PC-9 (cell line): ENCODE measurements at regions of chr6 and their contacts with region 1.

Region 1: DNA sequence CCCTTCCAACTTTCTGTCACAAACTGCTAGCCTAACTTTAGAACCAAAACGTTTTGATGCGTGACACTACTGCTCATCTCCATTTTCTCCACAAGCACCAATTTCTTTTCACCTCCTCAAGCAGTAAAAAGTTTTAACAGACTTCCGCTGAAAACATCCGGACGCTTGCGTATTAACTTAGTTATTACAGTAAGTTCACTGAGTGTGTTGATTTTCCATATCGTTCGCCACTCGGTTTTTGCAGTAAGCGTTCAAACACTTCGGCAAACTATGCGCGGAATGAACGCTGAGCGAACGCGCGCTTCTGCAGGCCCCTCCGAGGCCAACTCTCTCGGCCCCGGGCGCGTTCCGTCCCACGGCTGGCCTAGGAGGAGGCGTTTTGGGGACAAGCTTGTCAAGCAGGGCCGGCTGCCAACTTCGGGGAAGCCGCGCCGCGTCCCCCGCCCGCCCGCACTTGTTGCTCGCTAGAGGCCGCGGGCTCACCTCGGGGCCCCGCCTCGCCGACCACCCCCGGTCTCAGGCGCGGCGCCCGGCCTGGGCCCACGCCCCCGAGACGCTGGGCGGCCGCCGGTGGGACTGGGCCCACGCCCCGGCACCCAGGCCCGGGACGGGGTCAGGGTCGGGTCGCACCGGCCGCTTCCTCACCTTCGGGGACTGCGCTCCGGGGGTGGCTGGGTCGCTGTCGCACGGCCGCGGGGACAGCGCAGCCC is 945 bp downstream of the PHF10 start:
- DNase-seq: peak; percentile 36 to 39
- H3K4me3 ChIP-seq: peak overlapping the region; percentile 74
- H3K27ac ChIP-seq: peak overlapping the region; percentile 34
- H3K4me1 ChIP-seq: peaks cover 34% of the 10 kb centered on the region
- H3K27me3 ChIP-seq: no peaks in the 10 kb centered on the region
- CTCF ChIP-seq: no peak

Region 2: GRCh38 chr6:169751242-169752073 is 28.1 kb after region 1 on chr6 and contains the starts of genes DYNLT2 and ERMARD:
- CTCF ChIA-PET with region 1: no interaction called
- POLR2A ChIA-PET with region 1: no interaction called
- intact Hi-C with region 1: loop called (anchors 2 kb)
- DNase-seq: peak; percentile 74 to 87
- H3K4me3 ChIP-seq: peak within 1 kb of the TSS; percentile 82
- H3K27ac ChIP-seq: peak within 1 kb of the TSS; percentile 81
- H3K4me1 ChIP-seq: peaks cover 14% of the 10 kb centered on the region
- H3K27me3 ChIP-seq: no peaks in the 10 kb centered on the region
- CTCF ChIP-seq: no peak
- total RNA-seq, gene DYNLT2: 1.4 and 1.5 TPM in 2 replicates
- total RNA-seq, gene ERMARD: 19.3 and 28.2 TPM in 2 replicates

Region 3: GRCh38 chr6:169800668-169801395 is 77.5 kb after region 1 on chr6:
- CTCF ChIA-PET with region 1: no interaction called
- POLR2A ChIA-PET with region 1: no interaction called
- intact Hi-C with region 1: no loop called
- DNase-seq: peak; percentile 5 to 40
- H3K4me3 ChIP-seq: no peak overlapping the region
- H3K27ac ChIP-seq: no peak overlapping the region
- H3K4me1 ChIP-seq: no peaks in the 10 kb centered on the region
- H3K27me3 ChIP-seq: peaks cover 83% of the 10 kb centered on the region
- CTCF ChIP-seq: no peak